A549 (cell line): ENCODE measurements at regions of chr22 and their contacts with region 1.

Region 1: GRCh38 chr22:30005213-30005857 is 74.9 kb upstream of the HORMAD2 start:
- DNase-seq: peak; percentile 27 to 53
- ATAC-seq: peak; percentile 68 to 90; a peak in 3 of 6 replicates
- H3K4me3 ChIP-seq: no peak overlapping the region
- H3K27ac ChIP-seq: no peak overlapping the region
- H3K4me1 ChIP-seq: peaks cover 4% of the 10 kb centered on the region; the same call in 1 of the 3 replicates
- CTCF ChIP-seq: peak; percentile 88
- EP300 ChIP-seq: no peak
- POLR2A ChIP-seq: no peak
- RAD21 ChIP-seq: peak; percentile 86 to 92

Region 2: DNA sequence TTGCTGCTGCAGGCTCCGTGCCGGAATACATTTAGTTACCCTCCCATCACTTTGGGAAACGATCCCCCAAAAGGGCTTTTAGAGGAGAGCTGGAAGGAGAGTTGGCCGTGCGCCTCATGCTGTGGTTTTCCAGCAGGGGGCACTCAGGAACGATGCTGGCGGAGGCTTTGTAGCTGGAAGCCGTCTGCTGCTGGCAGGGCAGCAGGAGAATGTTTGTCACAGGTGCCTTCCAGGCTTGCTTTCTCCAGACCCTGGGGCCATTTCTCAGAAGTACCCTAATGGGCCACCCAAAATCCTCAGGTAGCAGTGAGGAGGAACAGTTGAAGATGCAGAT is 315.5 kb before region 1 on chr22:
- CTCF ChIA-PET with region 1: interaction called, 22 read pairs
- POLR2A ChIA-PET with region 1: no interaction called
- DNase-seq: peak in 1 of 2 experiments; percentile 30
- ATAC-seq: peak; percentile 57 to 85; a peak in 4 of 6 replicates
- H3K4me3 ChIP-seq: no peak overlapping the region
- H3K27ac ChIP-seq: no peak overlapping the region
- H3K4me1 ChIP-seq: no peaks in the 10 kb centered on the region
- CTCF ChIP-seq: peak; percentile 58
- EP300 ChIP-seq: no peak
- POLR2A ChIP-seq: no peak
- RAD21 ChIP-seq: peak; percentile 62 to 67; a peak in 4 of 5 replicates

Region 3: GRCh38 chr22:29701155-29701999 is 304.0 kb before region 1 on chr22:
- CTCF ChIA-PET with region 1: interaction called, 13 read pairs
- POLR2A ChIA-PET with region 1: no interaction called
- DNase-seq: peak; percentile 31 to 44
- ATAC-seq: peak; percentile 52 to 63
- H3K4me3 ChIP-seq: no peak overlapping the region
- H3K27ac ChIP-seq: peak overlapping the region in 1 of 2 experiments; percentile 78; a peak in 3 of 6 replicates
- H3K4me1 ChIP-seq: peaks cover 39% of the 10 kb centered on the region
- CTCF ChIP-seq: no peak
- EP300 ChIP-seq: no peak
- POLR2A ChIP-seq: no peak
- RAD21 ChIP-seq: peak in 1 of 2 experiments; percentile 44; a peak in 3 of 5 replicates

Region 4: DNA sequence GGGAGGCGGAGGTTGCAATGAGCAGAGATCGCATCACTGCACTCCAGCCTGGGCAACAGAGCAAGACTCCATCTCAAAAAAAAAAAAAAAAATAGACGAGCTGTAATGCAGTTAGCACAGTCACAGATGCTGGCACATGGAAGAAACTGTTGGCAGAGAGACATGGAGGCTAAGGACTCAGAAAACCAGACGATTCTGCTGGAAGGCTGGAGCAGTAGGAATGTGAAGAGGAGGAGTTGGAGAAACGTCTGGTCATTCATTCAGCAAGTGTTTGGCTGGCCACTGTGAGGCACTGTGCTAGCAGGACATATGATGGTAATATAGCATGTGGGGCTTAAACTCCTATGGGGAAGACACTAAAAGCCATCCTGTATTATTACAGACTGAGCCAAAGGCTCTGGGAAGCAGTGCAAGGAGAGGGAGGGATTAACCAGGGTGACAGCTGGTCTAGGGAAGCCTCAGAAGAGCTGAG is 233.1 kb before region 1 on chr22:
- CTCF ChIA-PET with region 1: interaction called, 20 read pairs
- POLR2A ChIA-PET with region 1: no interaction called
- DNase-seq: peak in 1 of 2 experiments; percentile 58
- ATAC-seq: peak; percentile 50 to 79; a peak in 5 of 6 replicates
- H3K4me3 ChIP-seq: no peak overlapping the region
- H3K27ac ChIP-seq: peak overlapping the region in 1 of 2 experiments; percentile 79; a peak in 1 of 6 replicates
- H3K4me1 ChIP-seq: peaks cover 18% of the 10 kb centered on the region
- CTCF ChIP-seq: peak; percentile 40
- EP300 ChIP-seq: no peak
- POLR2A ChIP-seq: no peak
- RAD21 ChIP-seq: peak; percentile 25 to 48; a peak in 2 of 5 replicates

Region 5: DNA sequence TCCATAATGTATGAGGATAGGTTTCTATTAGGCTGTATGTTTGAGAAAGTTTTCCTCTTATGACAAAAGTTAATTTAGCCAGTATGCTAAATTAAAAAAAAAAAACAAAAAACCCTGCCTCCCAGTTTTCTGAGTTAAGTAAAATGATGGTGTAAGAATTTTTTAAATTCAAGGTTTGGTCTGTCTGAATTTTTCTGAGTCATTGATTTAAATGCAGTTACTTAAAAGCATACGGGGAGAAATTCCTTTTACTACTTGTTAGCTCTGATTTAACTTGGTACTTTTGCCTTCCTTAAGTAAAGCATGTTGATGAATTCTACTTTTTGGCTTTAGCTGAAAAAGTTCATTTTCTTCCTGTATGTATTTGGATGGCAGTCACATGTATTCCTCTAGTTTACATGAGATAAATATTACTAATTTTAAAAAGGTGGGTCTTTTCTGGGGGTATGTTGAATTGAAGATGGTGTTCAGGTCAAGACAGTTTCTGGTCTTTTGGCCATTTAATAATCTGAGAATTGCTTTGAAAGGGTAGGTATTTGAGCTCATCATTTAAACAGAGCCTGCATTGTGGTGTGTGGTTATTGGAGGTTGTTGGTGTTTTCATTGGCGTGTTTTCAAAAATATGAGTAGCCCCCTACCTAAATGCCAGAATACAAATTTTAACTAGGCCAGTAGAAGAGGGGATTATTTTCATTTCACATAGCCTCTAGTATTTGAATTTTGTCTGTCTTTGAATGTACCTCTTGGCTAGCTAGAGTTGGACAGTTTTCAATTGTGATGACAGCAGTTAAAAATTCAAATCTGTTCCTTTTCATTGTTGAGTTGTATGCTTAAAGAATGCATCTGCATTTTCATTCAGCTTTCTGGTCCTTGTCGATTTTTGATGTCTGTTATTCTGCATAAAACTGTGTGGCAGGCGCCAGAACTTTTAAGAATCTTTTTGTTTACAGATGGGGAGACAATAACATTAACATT is 57.6 kb before region 1 on chr22:
- CTCF ChIA-PET with region 1: no interaction called
- POLR2A ChIA-PET with region 1: no interaction called
- DNase-seq: no peak
- ATAC-seq: no peak
- H3K4me3 ChIP-seq: no peak overlapping the region
- H3K27ac ChIP-seq: no peak overlapping the region
- H3K4me1 ChIP-seq: peaks cover 20% of the 10 kb centered on the region; the same call in 2 of the 3 replicates
- CTCF ChIP-seq: no peak
- EP300 ChIP-seq: no peak
- POLR2A ChIP-seq: no peak
- RAD21 ChIP-seq: no peak

Region 6: GRCh38 chr22:29994027-29994715 is 11.2 kb before region 1 on chr22:
- CTCF ChIA-PET with region 1: interaction called, 14 read pairs
- POLR2A ChIA-PET with region 1: no interaction called
- DNase-seq: peak; percentile 45 to 65
- ATAC-seq: peak; percentile 87 to 93
- H3K4me3 ChIP-seq: no peak overlapping the region
- H3K27ac ChIP-seq: peak overlapping the region; percentile 77 to 85
- H3K4me1 ChIP-seq: peaks cover 41% of the 10 kb centered on the region
- CTCF ChIP-seq: peak; percentile 37
- EP300 ChIP-seq: no peak; a peak in 1 of 5 replicates
- POLR2A ChIP-seq: no peak
- RAD21 ChIP-seq: peak; percentile 56 to 57